ENCODE measurements at regions of chr12 and their contacts with region 1.

Region 1: DNA sequence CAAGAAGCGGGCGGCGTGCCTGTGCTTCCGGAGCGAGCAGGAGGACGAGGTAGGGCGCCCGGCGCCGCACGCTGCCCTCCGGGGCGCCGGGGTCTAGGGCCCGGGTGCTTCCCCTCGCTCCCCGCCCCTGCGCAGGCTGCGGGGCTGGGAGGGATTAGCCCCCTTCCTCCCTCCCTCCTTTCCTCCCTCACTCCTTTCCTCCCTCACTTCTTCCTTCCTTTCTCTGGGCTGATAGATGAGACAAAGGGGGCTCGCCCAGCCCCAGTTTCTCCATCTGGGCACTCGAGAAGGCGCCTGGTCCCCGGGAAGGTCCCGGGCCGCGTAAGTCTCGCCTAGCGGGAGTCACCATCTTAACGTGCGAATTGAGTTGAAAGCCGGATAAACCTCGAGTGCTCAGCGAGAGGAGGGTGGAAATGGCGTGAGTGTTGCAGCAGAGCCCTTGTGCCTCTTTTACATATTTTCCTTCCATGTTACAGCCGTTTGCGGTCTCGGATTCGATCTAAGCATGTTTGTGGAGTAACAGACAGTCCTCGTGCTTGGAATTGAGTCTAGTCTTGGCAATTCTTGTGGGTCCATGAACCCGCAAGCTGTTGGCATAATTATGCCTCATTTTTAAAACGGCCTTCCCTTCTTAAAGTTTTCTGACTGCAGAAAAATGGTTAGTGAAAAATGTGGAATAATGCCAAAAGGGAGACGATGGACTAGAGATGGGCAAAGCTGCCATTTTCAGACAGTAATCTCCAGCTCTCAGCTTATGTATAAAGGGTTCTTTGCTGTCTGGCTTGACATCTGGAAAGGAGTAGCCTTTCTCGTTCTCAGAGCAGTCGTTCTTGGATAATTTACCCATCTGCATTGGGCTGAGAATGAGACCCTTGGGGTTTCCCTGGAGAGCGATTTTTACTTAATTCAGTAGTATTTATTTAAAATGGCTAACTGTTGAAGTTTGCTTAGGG is 924 bp downstream of the NUDT4 start:
- DNase-seq: peak in 1 of 2 donors; percentile 32
- ATAC-seq: peak; percentile 23 to 24
- H3K4me3 ChIP-seq: peak overlapping the region; percentile 93 to 98 (median 96)
- H3K27ac ChIP-seq: peak overlapping the region; percentile 97 to 99 (median 98)
- H3K4me1 ChIP-seq: peaks cover 31 to 62% of the 10 kb centered on the region in 2 donors
- H3K27me3 ChIP-seq: no peaks in the 10 kb centered on the region
- CTCF ChIP-seq: no peak
- POLR2A ChIP-seq: no peak

Region 2: DNA sequence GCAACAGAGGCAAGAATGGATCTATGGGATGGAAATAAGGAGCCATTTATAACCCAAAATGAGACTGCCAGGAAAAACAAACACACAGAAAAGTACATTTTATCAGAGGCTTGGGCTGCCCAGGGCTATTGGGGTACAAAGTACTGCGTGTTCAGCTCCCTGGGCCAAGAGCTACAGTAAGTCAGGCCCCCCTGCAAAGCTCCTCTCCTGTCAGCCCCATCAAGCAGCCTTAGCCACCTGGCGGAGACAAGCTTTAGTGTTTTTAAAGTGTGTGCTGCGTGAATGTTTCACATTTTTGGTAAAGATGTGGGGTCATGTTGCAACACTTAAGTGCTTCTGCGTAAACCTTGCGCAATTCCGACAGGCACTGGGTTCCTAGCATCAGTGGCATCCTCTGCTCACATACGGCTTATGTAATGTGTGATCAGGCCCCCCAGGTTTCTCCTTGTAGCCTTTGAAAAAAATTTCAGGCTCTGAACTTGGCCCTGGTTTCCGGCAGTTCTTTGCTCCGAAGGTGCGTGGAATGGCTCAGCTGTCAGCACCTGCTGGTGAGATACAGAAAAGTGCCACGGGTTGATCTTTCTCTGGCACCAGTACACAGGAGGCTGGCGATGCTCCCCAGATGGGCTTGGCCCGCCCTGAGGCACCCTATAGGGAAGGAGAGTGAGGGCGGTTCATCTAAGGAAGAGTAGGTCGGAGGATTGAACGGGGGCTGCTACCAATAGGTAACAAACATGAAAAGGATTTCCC is 250.9 kb before region 1 on chr12:
- in situ Hi-C with region 1: no loop called
- intact Hi-C with region 1: loop called (anchors 5 kb)
- DNase-seq: peak; percentile 36 to 44
- ATAC-seq: peak; percentile 49 to 63
- H3K4me3 ChIP-seq: peak overlapping the region; percentile 19 to 47 (median 22)
- H3K27ac ChIP-seq: peak overlapping the region; percentile 84 to 89 (median 87)
- H3K4me1 ChIP-seq: peaks cover 25 to 27% of the 10 kb centered on the region in 2 donors
- H3K27me3 ChIP-seq: no peaks in the 10 kb centered on the region
- CTCF ChIP-seq: peak; percentile 10 to 47 (median 37)
- POLR2A ChIP-seq: no peak

Region 3: GRCh38 chr12:93243689-93244513 is 134.7 kb before region 1 on chr12:
- in situ Hi-C with region 1: no loop called
- intact Hi-C with region 1: loop called (anchors 5 kb)
- DNase-seq: peak in 1 of 2 donors; percentile 45
- ATAC-seq: peak; percentile 85 to 92
- H3K4me3 ChIP-seq: no peak overlapping the region
- H3K27ac ChIP-seq: peak overlapping the region; percentile 42 to 71 (median 52)
- H3K4me1 ChIP-seq: peaks cover 14 to 17% of the 10 kb centered on the region in 2 donors
- H3K27me3 ChIP-seq: no peaks in the 10 kb centered on the region
- CTCF ChIP-seq: no peak
- POLR2A ChIP-seq: peak in 1 of 2 donors; percentile 10

Region 4: DNA sequence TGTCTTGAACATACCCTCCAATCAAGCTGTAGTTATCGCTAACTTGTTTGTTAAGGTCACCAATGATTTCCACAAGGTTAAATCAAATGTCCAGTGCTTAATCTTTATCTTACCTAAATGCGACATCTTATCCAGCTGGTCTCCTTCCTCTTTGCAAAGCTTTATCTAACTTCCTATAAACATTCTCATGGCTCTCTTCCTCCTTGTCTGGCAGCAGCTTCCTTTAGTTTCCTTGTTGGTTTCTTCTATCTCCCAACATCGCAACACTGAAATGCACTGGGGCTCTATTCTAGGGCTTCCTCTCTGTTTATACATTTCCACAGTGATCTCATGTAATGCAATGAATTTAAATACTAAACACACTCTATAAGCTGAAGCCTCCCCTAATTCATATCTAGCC is 34.4 kb after region 1 on chr12:
- in situ Hi-C with region 1: no loop called
- intact Hi-C with region 1: loop called (anchors 5 kb)
- DNase-seq: no peak
- ATAC-seq: no peak
- H3K4me3 ChIP-seq: no peak overlapping the region
- H3K27ac ChIP-seq: peak overlapping the region in 3 of 4 donors; percentile 1 to 34 (median 30)
- H3K4me1 ChIP-seq: peaks cover 56 to 69% of the 10 kb centered on the region in 2 donors
- H3K27me3 ChIP-seq: no peaks in the 10 kb centered on the region
- CTCF ChIP-seq: no peak
- POLR2A ChIP-seq: no peak

Region 5: GRCh38 chr12:93441617-93442410 is 63.2 kb after region 1 on chr12 and contains the start of gene UBE2N:
- in situ Hi-C with region 1: no loop called
- intact Hi-C with region 1: no loop called
- DNase-seq: peak; percentile 93 to 94
- ATAC-seq: peak; percentile 90
- H3K4me3 ChIP-seq: peak within 1 kb of the TSS; percentile 71 to 99 (median 86)
- H3K27ac ChIP-seq: peak within 1 kb of the TSS; percentile 84 to 99 (median 91)
- H3K4me1 ChIP-seq: peaks cover 41 to 48% of the 10 kb centered on the region in 2 donors
- H3K27me3 ChIP-seq: no peaks in the 10 kb centered on the region
- CTCF ChIP-seq: no peak
- POLR2A ChIP-seq: peak; percentile 83 to 86
- total RNA-seq, gene UBE2N: 26.5 to 46.8 (median 30.5) TPM

Region 6: DNA sequence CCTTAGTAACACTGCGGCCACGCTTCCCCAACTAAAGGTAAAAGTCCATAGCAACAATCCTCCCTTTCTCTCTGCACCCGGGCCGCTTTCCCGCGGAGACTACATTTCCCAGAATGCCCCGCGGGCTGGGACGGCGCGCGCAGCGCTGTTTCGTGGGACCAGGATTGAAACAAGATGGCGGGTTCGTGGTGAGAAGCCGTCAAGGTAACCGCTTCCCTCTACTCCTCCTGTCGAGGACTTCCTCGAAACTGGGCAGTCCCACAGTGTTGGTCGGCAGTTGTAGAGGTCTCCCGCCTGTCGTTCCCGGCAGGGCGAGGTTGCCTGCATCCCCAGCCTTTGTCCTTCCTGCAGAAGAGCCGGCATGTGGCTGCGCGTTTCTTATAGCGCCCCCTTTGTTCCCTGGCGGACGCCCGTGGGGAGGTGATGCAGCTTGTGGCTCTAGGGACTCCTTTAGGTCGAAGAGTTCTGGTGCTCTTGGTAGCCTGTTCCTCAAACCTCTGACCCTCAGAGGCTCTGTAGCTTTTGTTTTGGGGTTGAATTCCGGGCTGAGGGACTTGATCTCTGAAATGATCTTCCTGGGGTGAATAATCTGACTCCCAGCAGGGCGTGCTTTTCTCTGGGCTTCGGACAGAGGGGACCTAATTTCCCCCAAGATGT is 88.8 kb after region 1 on chr12 and contains the start of gene MRPL42:
- in situ Hi-C with region 1: no loop called
- intact Hi-C with region 1: no loop called
- DNase-seq: peak; percentile 61 to 85
- ATAC-seq: peak; percentile 96 to 98
- H3K4me3 ChIP-seq: peak within 1 kb of the TSS; percentile 72 to 93 (median 88)
- H3K27ac ChIP-seq: peak within 1 kb of the TSS; percentile 89 to 95 (median 95)
- H3K4me1 ChIP-seq: peaks cover 13 to 14% of the 10 kb centered on the region in 2 donors
- H3K27me3 ChIP-seq: no peaks in the 10 kb centered on the region
- CTCF ChIP-seq: peak; percentile 54 to 85 (median 68)
- POLR2A ChIP-seq: peak; percentile 50 to 67
- total RNA-seq, gene MRPL42: 14.0 to 44.6 (median 34.8) TPM

Region 7: GRCh38 chr12:93550748-93551611 is 172.3 kb after region 1 on chr12:
- in situ Hi-C with region 1: no loop called
- intact Hi-C with region 1: no loop called
- DNase-seq: no peak
- ATAC-seq: no peak
- H3K4me3 ChIP-seq: no peak overlapping the region
- H3K27ac ChIP-seq: no peak overlapping the region
- H3K4me1 ChIP-seq: no peaks in the 10 kb centered on the region
- H3K27me3 ChIP-seq: no peaks in the 10 kb centered on the region
- CTCF ChIP-seq: no peak
- POLR2A ChIP-seq: no peak

Measured in gastrocnemius medialis (tissue), 4 donors.